Activated B cell treated with CpG ODN at 0.5 μM for 24 hours (primary cell): ENCODE measurements at regions of chr12 and their contacts with region 1.

Region 1: GRCh38 chr12:6944381-6945186 is 762 bp downstream of the C12orf57 start:
- DNase-seq: peak; percentile 80
- ATAC-seq: peak; percentile 41
- H3K4me3 Mint-ChIP-seq: peak overlapping the region; percentile 91
- H3K27ac Mint-ChIP-seq: peak overlapping the region; percentile 96
- H3K4me1 Mint-ChIP-seq: peaks cover 72% of the 10 kb centered on the region
- H3K27me3 Mint-ChIP-seq: no peaks in the 10 kb centered on the region
- CTCF ChIP-seq: peak; percentile 59

Region 2: DNA sequence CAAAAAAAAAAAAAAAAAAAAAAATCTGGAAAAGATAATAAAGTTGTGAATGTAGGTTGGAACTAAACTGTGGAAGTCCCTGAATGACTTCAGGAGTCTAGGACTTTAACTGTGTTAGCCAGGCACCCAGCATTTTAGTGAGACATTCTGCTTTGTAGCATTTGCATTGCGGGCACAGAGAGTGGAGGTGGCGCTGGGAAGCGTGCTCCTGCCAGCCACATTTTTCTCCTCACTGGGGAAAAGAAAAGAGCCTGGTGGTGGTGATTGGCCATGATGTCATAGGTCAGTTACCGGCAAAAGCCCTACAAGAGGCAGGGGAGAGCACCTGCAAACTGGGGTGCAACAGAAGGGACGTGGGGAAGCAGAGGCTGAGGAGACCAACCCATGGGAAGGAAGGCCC is 419.9 kb before region 1 on chr12:
- CTCF ChIA-PET with region 1: no interaction called
- POLR2A ChIA-PET with region 1: no interaction called
- intact Hi-C with region 1: no loop called
- DNase-seq: no peak
- ATAC-seq: no peak
- H3K4me3 Mint-ChIP-seq: no peak overlapping the region
- H3K27ac Mint-ChIP-seq: no peak overlapping the region
- H3K4me1 Mint-ChIP-seq: no peaks in the 10 kb centered on the region
- H3K27me3 Mint-ChIP-seq: no peaks in the 10 kb centered on the region
- CTCF ChIP-seq: no peak

Region 3: DNA sequence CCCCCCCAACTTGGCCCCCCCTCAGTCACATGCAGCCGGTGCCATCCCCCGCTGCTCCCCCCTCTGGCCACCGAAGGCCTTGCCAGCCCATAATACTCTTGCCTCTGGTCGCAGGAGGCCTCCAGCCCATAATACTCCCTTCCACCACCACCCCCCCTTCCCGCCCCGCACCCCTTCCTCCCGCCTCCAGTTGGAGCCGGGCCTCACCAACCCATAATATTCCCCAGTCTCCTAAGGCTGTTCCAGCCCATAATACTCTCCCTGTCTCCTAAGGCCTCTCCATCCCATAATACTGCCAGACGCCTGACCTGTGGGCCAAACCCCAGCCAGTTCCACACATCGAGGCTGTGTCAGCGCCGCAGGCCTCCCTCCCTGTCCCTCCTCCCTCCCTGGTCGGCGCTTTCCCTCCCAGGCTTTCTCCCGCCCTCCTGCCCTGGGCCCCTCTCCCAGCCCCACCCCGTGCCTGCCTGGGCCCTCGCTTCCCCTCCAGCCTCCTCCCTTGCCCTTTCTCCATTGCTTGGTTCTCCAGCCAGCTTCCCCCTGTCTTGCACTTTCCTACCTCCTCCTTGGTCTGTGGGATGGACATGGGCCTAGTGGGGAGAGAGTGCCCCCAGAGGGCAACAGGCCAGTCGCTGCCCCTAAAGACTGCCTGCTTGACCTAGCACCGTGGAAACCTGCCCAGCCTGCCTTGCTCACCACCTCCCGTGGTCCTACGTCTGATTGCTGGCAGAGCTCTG is 330.6 kb before region 1 on chr12:
- CTCF ChIA-PET with region 1: interaction called, 5 read pairs
- POLR2A ChIA-PET with region 1: interaction called, 20 read pairs
- intact Hi-C with region 1: no loop called
- DNase-seq: peak; percentile 28
- ATAC-seq: peak; percentile 36
- H3K4me3 Mint-ChIP-seq: no peak overlapping the region
- H3K27ac Mint-ChIP-seq: peak overlapping the region; percentile 88
- H3K4me1 Mint-ChIP-seq: peaks cover 75% of the 10 kb centered on the region
- H3K27me3 Mint-ChIP-seq: no peaks in the 10 kb centered on the region
- CTCF ChIP-seq: no peak

Region 4: GRCh38 chr12:6672143-6672542 is 272.4 kb before region 1 on chr12:
- CTCF ChIA-PET with region 1: no interaction called
- POLR2A ChIA-PET with region 1: no interaction called
- intact Hi-C with region 1: no loop called
- DNase-seq: no peak
- ATAC-seq: no peak
- H3K4me3 Mint-ChIP-seq: no peak overlapping the region
- H3K27ac Mint-ChIP-seq: no peak overlapping the region
- H3K4me1 Mint-ChIP-seq: peaks cover under 1% of the 10 kb centered on the region
- H3K27me3 Mint-ChIP-seq: no peaks in the 10 kb centered on the region
- CTCF ChIP-seq: no peak

Region 5: DNA sequence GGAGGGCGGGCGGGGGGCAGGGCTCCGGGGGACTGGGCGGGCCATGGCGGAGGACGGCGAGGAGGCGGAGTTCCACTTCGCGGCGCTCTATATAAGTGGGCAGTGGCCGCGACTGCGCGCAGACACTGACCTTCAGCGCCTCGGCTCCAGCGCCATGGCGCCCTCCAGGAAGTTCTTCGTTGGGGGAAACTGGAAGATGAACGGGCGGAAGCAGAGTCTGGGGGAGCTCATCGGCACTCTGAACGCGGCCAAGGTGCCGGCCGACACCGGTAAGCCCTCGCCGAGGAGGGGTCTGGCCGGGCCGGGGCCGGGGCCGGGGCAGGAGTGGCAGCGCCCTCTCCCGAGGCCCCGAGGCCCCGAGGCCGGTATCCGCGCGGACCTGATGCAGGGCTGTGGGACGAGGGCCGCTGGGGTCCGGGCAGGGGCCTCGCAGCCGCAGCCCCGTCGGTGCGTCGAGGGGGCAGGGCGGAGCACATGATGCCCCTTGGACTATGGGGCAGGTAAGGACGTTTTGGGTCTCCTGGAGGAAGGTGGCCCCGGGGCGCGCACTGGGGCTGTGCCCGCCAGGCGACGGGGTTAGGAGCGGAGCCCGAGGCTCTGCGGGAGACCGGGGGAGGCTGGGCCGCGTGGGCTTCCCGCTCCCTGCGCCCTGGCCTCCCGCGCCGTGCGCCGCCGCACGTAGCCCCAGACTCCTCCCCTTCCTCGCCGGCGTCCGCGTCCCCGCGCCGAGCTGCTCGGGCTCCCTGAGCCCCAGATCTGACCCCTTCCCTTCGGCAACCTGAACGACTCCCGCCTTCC is 77.0 kb before region 1 on chr12 and contains the start of gene TPI1:
- CTCF ChIA-PET with region 1: interaction called, 26 read pairs
- POLR2A ChIA-PET with region 1: interaction called, 87 read pairs
- intact Hi-C with region 1: loop called (anchors 1 kb)
- DNase-seq: peak; percentile 65
- ATAC-seq: peak; percentile 78
- H3K4me3 Mint-ChIP-seq: peak within 1 kb of the TSS; percentile 89
- H3K27ac Mint-ChIP-seq: peak within 1 kb of the TSS; percentile 84
- H3K4me1 Mint-ChIP-seq: peaks cover 51% of the 10 kb centered on the region
- H3K27me3 Mint-ChIP-seq: no peaks in the 10 kb centered on the region
- CTCF ChIP-seq: no peak
- total RNA-seq, gene TPI1: 306 and 318 TPM in 2 replicates

Region 6: GRCh38 chr12:6890789-6891645 is 53.6 kb before region 1 on chr12:
- CTCF ChIA-PET with region 1: no interaction called
- POLR2A ChIA-PET with region 1: interaction called, 27 read pairs
- intact Hi-C with region 1: loop called (anchors 1 kb)
- DNase-seq: peak; percentile 97
- ATAC-seq: peak; percentile 93
- H3K4me3 Mint-ChIP-seq: peak overlapping the region; percentile 84
- H3K27ac Mint-ChIP-seq: peak overlapping the region; percentile 93
- H3K4me1 Mint-ChIP-seq: peaks cover 15% of the 10 kb centered on the region
- H3K27me3 Mint-ChIP-seq: no peaks in the 10 kb centered on the region
- CTCF ChIP-seq: peak; percentile 65

Region 7: DNA sequence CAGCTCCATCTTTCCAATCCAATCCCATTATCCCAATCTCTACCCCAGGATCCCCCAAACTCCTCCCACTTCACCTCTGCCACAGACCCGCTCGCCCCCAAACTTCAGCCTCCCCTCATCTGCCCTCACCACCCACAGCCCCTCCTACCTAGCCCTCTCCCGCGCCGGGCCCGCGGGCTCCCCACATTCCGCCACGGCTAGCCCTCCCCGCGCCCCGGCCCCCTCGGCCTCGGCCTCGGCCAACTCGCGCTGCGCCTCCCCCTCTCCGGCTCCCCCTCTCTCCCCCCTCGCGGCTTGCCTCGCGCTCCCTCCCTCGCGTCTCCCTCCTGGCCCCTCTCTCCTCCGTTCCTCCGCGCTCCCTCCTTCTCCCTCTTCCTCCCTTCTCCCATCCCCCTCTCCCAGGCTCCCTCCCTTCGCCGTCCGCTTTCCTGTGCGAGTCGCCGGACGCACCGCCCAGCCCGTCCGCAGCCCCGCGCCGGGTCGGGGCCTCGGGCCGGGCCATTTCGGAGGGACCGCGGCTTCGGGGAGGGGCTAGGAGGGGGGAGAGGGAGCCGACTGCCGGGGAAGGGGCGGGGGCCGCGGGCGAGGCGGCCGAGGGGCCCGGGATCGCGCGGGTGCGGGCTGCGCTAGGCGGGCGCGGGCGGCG is 17.1 kb before region 1 on chr12 and contains the start of gene ATN1:
- CTCF ChIA-PET with region 1: interaction called, 14 read pairs
- POLR2A ChIA-PET with region 1: interaction called, 89 read pairs
- intact Hi-C with region 1: no loop called
- DNase-seq: peak; percentile 58
- ATAC-seq: peak; percentile 42
- H3K4me3 Mint-ChIP-seq: peak within 1 kb of the TSS; percentile 86
- H3K27ac Mint-ChIP-seq: peak within 1 kb of the TSS; percentile 86
- H3K4me1 Mint-ChIP-seq: peaks cover 54% of the 10 kb centered on the region
- H3K27me3 Mint-ChIP-seq: no peaks in the 10 kb centered on the region
- CTCF ChIP-seq: no peak
- total RNA-seq, gene ATN1: 42.8 and 50.9 TPM in 2 replicates

Region 8: DNA sequence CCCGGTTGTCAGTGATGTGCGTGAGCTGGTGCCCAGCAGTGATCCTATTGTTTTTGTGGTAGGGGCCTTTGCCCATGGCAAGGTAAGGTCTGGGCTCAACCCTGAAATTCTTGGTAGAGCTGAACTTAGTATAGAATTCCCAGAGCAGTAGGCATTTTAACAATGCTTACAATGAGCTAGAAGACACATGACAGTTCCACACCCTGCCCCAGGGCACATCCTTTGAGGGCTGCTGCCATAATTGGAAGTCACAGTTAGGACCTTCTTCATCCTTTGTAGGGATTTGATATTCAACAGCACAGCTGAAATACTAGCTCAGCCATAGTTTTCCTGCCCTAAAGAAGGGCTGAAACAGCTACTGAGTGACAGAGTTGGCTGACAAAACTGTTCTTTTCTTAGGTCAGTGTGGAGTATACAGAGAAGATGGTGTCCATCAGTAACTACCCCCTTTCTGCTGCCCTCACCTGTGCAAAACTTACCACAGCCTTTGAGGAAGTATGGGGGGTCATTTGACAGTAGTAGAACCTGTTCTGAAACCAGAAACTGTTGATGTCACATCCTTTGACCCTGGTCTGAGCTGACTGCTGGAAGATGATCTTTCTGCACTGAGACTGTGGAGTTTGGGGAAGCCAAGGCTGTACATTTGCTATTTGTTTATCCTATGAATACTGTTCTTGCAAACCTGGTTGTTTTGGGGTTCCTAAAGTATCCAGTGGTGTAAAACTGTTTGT is 30.9 kb after region 1 on chr12:
- CTCF ChIA-PET with region 1: interaction called, 4 read pairs
- POLR2A ChIA-PET with region 1: interaction called, 126 read pairs
- intact Hi-C with region 1: loop called (anchors 1 kb)
- DNase-seq: no peak
- ATAC-seq: no peak
- H3K4me3 Mint-ChIP-seq: no peak overlapping the region
- H3K27ac Mint-ChIP-seq: no peak overlapping the region
- H3K4me1 Mint-ChIP-seq: peaks cover 23% of the 10 kb centered on the region
- H3K27me3 Mint-ChIP-seq: no peaks in the 10 kb centered on the region
- CTCF ChIP-seq: no peak

Region 9: DNA sequence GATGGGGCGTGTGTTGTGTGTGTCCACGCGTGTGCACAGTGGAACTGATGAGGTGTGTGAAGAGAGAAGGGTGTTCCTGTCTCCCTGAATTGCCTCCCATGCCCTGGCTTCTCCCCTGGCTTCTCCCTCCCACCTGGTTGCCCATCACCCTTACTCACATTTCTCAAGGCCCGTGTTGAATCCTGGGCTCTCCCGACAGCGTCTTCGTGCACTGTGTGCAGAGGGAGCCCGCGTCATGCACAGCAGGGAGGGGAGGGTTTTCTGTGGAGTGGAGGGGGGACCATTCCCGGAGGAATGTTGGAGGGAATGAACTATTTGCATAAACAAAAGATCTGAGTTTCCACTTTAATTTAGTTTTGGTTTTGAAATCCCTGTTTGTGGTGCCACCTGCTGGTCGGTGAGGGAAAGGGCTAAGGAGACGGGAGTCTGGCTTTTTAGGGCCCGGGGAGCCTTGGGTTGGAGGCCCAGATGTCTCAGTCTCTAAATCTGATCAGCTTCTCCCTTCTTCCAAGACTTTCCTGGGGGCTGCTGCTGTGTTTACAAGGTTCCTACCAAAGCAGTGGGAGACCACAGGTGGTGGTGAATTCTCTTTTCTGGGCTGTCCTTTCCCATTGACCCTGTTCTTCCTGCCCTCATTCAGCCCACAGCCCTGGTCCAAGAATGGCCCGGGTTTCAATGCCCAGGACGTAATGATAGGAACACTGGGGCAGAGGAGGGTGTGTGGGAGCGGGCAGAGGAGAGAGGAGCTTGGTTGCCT is 147.8 kb after region 1 on chr12 and contains the start of gene C1R:
- CTCF ChIA-PET with region 1: interaction called, 9 read pairs
- POLR2A ChIA-PET with region 1: interaction called, 6 read pairs
- intact Hi-C with region 1: loop called (anchors 1 kb)
- DNase-seq: peak; percentile 53
- ATAC-seq: peak; percentile 80
- H3K4me3 Mint-ChIP-seq: peak within 1 kb of the TSS; percentile 87
- H3K27ac Mint-ChIP-seq: peak within 1 kb of the TSS; percentile 61
- H3K4me1 Mint-ChIP-seq: peaks cover 8% of the 10 kb centered on the region
- H3K27me3 Mint-ChIP-seq: no peaks in the 10 kb centered on the region
- CTCF ChIP-seq: no peak
- total RNA-seq, gene C1R: 0.54 and 0.78 TPM in 2 replicates